H1 (cell line): ENCODE measurements at regions of chr11 and their contacts with region 1.

Region 1: GRCh38 chr11:44950625-44951476 is at the start of gene TP53I11:
- DNase-seq: no peak
- H3K4me3 ChIP-seq: peak within 1 kb of the TSS; percentile 64 to 78 (median 70)
- H3K27ac ChIP-seq: peak within 1 kb of the TSS; percentile 21; the same call in 1 of the 2 replicates
- H3K4me1 ChIP-seq: peaks cover 12 to 51% (median 31%) of the 10 kb centered on the region in 4 experiments
- H3K27me3 ChIP-seq: no peaks in the 10 kb centered on the region; a peak in 1 of 7 replicates
- CTCF ChIP-seq: peak in 2 of 3 experiments; percentile 33 to 70; a peak in 3 of 4 replicates
- EP300 ChIP-seq: no peak
- POLR2A ChIP-seq: no peak
- RAD21 ChIP-seq: peak; percentile 28 to 57; a peak in 3 of 4 replicates
- total RNA-seq, gene TP53I11: 46.3 and 53.7 TPM in 2 replicates

Region 2: DNA sequence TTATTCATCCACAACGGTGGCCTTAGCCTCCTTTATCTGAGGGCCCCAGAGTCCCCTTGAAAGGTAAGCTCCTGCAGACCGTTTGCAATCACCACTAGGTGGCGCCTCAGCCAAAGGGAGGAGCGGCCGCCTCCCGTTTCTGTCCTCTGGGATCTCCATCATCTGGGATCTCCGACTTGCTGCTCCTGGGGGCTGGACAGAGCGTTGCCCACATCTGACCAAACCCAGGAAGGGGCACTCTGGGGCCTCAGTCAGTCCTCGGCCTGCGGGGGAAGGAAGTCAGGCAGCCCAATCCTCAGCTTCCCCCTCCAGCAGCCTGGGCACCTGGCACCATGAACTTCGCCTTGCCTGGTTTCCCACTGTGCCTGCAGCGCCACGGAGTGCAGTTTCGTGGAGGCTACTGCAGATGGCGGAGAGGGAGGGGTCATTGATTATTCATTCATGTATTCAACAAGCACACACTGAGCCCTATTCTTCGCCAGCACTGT is 23.6 kb before region 1 on chr11:
- CTCF ChIA-PET with region 1: interaction called, 731 read pairs
- POLR2A ChIA-PET with region 1: interaction called, 7 read pairs
- DNase-seq: peak; percentile 70 to 91
- H3K4me3 ChIP-seq: peak overlapping the region in 1 of 4 experiments; percentile 20; a peak in 1 of 8 replicates
- H3K27ac ChIP-seq: no peak overlapping the region
- H3K4me1 ChIP-seq: peaks cover 0 to 18% (median 13%) of the 10 kb centered on the region in 4 experiments; a peak in 6 of 7 replicates
- H3K27me3 ChIP-seq: no peaks in the 10 kb centered on the region
- CTCF ChIP-seq: peak; percentile 84 to 95 (median 93)
- EP300 ChIP-seq: no peak
- POLR2A ChIP-seq: no peak
- RAD21 ChIP-seq: peak; percentile 86 to 93

Region 3: GRCh38 chr11:44936525-44936924 is 14.3 kb before region 1 on chr11:
- CTCF ChIA-PET with region 1: interaction called, 731 read pairs
- POLR2A ChIA-PET with region 1: interaction called, 5 read pairs
- DNase-seq: peak; percentile 64 to 98
- H3K4me3 ChIP-seq: 0 out of 8 replicates have a peak overlapping the region, but pooled peaks of 1 of the 4 experiments have one; percentile 18
- H3K27ac ChIP-seq: no peak overlapping the region
- H3K4me1 ChIP-seq: peaks cover 0 to 11% (median 7%) of the 10 kb centered on the region in 4 experiments; a peak in 6 of 7 replicates
- H3K27me3 ChIP-seq: no peaks in the 10 kb centered on the region
- CTCF ChIP-seq: peak in 2 of 3 experiments; percentile 91 to 98; a peak in 3 of 4 replicates
- EP300 ChIP-seq: no peak
- POLR2A ChIP-seq: no peak
- RAD21 ChIP-seq: peak; percentile 98 to 99

Region 4: GRCh38 chr11:44964526-44965209 is 13.8 kb after region 1 on chr11:
- CTCF ChIA-PET with region 1: interaction called, 731 read pairs
- POLR2A ChIA-PET with region 1: interaction called, 10 read pairs
- DNase-seq: no peak
- H3K4me3 ChIP-seq: no peak overlapping the region
- H3K27ac ChIP-seq: no peak overlapping the region
- H3K4me1 ChIP-seq: peaks cover 13 to 44% (median 28%) of the 10 kb centered on the region in 4 experiments
- H3K27me3 ChIP-seq: no peaks in the 10 kb centered on the region; a peak in 2 of 7 replicates
- CTCF ChIP-seq: no peak
- EP300 ChIP-seq: no peak
- POLR2A ChIP-seq: no peak
- RAD21 ChIP-seq: no peak; a peak in 1 of 4 replicates

Region 5: DNA sequence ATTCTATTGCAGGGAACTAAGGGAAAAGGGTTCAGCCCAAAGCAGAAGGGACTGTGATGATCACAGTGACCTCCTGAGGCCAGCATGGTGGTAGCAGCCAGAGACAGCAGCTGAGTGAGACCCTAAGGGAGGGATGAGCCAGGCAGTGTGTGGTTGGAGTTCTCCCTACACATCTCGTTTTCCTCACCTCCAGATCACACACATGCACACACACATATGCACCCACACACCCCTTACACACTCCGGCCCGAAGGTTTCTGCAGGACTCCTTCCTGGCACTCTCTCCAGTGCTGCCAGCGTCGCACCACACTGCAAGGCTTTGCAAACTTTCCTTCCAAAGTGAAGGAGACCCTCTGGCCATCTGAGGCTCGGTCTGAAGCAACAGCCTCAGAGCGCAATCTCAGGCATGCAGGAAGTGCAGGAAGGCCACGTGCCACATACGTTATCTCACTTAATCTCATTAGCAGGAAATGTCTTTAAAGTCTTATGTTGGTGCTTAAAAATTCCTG is 26.7 kb after region 1 on chr11:
- CTCF ChIA-PET with region 1: interaction called, 731 read pairs
- POLR2A ChIA-PET with region 1: interaction called, 4 read pairs
- DNase-seq: no peak
- H3K4me3 ChIP-seq: no peak overlapping the region
- H3K27ac ChIP-seq: no peak overlapping the region
- H3K4me1 ChIP-seq: peaks cover 0 to 27% (median 18%) of the 10 kb centered on the region in 4 experiments; a peak in 6 of 7 replicates
- H3K27me3 ChIP-seq: no peaks in the 10 kb centered on the region
- CTCF ChIP-seq: peak; percentile 57 to 83 (median 79)
- EP300 ChIP-seq: no peak
- POLR2A ChIP-seq: no peak
- RAD21 ChIP-seq: peak; percentile 48 to 69

Region 6: GRCh38 chr11:45073685-45074141 is 122.9 kb after region 1 on chr11:
- CTCF ChIA-PET with region 1: interaction called, 1,347 read pairs
- POLR2A ChIA-PET with region 1: no interaction called
- DNase-seq: no peak
- H3K4me3 ChIP-seq: no peak overlapping the region
- H3K27ac ChIP-seq: no peak overlapping the region
- H3K4me1 ChIP-seq: peaks cover 0 to 7% (median 0%) of the 10 kb centered on the region in 4 experiments; a peak in 3 of 7 replicates
- H3K27me3 ChIP-seq: peaks cover 0 to 2% (median 0%) of the 10 kb centered on the region in 4 experiments; a peak in 1 of 7 replicates
- CTCF ChIP-seq: no peak
- EP300 ChIP-seq: no peak
- POLR2A ChIP-seq: no peak
- RAD21 ChIP-seq: no peak